Right ventricle myocardium inferior (tissue), 1 donor: ENCODE measurements at regions of chr15 and their contacts with region 1.

Region 1: DNA sequence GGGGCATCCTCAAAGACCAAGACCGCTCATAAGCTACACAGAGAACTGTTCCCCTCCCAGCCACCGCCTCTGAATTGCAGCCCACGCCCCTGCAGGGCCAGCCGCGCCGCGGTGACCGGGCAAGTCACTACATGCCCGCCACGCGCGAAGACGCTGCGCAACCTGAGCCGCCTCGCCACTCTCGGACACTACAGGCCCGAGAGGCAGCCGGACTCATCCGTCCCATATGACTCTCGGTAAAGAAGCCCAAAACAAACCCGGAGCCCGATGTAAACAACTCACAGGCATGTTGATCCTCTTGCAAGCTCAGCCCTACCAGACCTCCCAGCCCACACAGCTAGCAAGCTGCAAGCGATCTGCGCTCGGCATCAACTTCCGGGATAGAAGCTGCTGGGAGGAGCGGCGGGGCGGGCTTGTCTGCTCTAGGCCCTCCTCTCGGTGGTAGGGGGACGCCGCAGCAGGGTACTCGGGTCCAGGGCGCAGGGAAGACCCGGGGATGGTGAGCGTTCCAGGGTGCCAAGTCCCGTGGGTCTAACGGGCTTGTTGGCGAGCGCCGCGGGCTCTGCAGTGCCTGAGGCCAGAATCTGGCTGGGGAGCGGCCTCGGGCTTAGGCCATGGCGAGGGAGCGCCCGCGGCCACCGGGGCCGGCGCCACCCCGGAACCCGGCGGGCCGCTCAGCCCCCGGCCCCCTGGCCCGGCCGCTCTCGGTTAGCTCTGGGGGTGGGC is at the start of gene RPS27L:
- DNase-seq: peak; percentile 97
- ATAC-seq: peak; percentile 98
- total RNA-seq, gene RPS27L: 193 TPM

Region 2: DNA sequence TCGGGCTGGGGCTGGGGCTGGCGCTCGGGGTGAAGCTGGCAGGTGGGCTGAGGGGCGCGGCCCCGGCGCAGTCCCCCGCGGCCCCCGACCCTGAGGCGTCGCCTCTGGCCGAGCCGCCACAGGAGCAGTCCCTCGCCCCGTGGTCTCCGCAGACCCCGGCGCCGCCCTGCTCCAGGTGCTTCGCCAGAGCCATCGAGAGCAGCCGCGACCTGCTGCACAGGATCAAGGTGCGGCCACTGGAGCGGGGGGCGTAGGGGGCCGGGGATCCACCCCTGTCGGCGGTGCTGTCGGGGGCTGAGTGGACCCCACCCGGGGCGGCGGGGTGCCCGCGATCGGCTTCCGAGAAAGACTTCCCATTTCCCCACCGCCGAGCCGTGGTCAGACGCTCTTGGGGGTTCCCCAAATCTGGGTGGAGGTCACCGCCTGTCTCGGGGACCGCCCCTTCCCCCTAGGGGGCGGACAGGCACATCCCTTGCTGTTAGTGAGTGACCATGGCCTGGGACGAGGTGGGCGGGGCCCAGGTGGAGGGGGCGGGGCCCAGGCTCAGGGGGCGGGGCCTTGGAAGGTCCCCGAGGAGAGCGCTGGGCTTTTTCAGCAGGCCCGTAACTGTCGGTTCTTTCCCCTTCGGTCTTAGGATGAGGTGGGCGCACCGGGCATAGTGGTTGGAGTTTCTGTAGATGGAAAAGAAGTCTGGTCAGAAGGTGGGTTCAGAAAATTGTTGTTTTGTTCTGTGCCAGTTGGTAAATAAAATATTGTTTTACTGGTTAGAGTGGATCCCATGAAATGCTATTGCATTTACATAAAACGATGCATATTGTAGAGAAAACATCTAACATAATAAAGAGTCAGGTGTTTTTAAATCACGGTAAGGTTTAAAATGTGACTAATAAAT is 35.0 kb before region 1 on chr15:
- intact Hi-C with region 1: loop called (anchors 5 kb)
- DNase-seq: peak; percentile 94
- ATAC-seq: peak; percentile 98

Region 3: GRCh38 chr15:63188926-63189871 is 31.9 kb after region 1 on chr15 and contains the start of gene RAB8B:
- intact Hi-C with region 1: loop called (anchors 2 kb)
- DNase-seq: peak; percentile 100
- ATAC-seq: peak; percentile 99
- total RNA-seq, gene RAB8B: 12.3 TPM

Region 4: GRCh38 chr15:63246691-63247464 is 89.6 kb after region 1 on chr15:
- intact Hi-C with region 1: loop called (anchors 10 kb)
- DNase-seq: no peak
- ATAC-seq: peak; percentile 85

Region 5: GRCh38 chr15:63277038-63277892 is 120.0 kb after region 1 on chr15 and contains the start of gene APH1B:
- intact Hi-C with region 1: loop called (anchors 2 kb)
- DNase-seq: peak; percentile 94
- ATAC-seq: peak; percentile 97
- total RNA-seq, gene APH1B: 6.2 TPM

Region 6: DNA sequence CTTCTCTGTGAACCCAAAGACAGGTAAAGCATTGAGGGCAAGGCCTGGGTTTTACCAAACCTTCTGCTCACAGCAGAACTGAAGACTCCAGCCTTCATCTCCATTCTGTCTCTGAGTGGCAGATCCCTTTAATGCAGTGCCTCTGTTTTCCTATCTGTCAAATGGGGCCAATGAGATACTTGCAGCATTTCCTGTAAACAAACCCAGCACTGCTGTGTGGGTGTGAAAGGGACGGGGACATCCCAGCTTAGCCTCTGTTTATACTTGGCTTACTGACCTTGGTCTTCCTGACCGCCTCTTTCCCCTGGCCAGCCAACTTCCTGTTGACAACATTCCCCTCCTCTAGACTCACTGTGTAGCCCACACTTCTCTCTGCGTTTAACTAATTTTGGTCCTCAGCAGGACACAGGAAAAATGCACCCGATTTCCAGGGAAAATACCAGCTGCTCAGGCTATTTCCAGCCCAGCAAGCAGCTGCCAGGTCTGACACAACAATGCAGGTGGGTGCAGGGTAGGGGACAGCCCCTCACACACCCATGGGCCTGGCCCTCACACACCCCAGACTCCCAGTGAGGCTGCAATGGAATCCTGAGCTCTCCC is 782.4 kb after region 1 on chr15:
- intact Hi-C with region 1: no loop called
- DNase-seq: no peak
- ATAC-seq: peak; percentile 72